Activated CD4-positive, alpha-beta T cell treated with anti-CD3 and anti-CD28 coated beads for 36 hours (primary cell): ENCODE measurements at regions of chr2 and their contacts with region 1.

Region 1: DNA sequence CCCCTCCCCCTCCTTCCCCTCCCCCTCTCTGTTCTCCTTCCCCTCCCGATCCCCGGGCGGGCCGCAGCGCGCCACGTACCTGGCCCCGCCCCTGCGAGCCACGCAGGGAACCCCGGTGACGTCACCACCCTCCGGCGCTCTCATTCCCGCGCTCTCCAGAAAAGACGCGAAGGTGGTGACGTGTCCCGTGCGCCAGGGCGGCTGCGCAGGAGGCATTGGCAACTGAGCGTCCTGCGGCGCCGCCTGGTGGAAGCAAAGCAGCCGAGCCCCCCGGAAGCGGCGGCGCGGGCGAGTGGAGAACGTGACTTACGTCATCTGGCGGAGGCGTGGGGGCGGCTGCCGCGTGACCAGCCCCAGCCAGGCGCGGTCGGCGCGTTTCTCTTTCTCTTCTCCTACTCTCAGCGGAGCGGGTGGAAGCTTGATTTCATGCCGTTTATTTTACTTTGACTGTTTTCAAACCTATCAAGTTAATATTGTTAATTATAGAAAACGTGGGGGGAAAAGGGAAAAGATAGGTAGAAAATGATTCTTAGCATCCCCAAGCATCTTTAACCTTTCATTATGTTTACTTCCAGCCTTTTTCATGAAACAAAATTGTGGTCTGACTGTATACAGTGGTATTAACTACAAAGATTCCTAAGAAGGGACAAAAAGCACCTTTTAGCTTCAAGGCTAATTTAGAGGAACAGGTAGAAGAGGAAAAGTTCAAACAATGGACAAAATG is 48.1 kb downstream of the C2orf42 start:
- DNase-seq: peak; percentile 100
- ATAC-seq: peak; percentile 57
- H3K4me3 Mint-ChIP-seq: peak overlapping the region; percentile 78
- H3K27ac Mint-ChIP-seq: peak overlapping the region; percentile 100
- H3K4me1 Mint-ChIP-seq: peaks cover 66% of the 10 kb centered on the region
- H3K27me3 Mint-ChIP-seq: no peaks in the 10 kb centered on the region

Region 2: DNA sequence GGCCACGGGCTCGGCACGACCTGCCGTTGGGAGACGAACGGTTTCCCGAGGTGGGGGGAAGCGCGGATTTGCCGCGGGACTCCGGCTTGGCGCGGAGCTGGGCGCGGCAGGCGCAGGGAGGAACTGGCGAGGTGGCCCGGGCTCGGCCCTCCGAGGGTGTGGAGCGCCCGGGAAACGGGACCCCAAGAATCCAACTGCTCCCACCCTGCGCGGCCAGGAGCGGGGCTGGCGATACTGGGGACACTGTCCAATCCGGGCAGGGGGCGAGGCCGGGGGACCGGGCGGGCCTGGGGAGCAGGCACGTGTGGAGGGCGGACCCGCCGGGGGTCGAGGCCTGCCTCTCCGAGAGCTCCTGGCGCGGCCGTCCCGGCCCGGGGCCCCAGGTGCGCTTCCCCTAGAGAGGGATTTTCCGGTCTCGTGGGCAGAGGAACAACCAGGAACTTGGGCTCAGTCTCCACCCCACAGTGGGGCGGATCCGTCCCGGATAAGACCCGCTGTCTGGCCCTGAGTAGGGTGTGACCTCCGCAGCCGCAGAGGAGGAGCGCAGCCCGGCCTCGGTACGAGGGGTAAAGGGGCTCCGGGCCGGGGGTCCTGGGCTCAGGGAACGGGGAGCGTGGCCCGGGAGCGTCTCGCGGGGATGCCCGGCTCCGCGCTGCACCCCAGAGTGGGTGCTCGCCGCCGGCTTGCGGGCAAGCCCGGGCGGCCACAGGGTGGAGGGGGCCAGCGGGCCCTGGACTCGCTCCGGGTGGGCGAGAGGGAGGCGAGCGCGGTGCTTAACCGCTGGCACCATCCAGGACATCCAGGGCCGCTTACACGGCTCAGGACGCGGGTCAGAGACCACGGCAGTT is 400.9 kb before region 1 on chr2 and contains the start of gene ANXA4:
- CTCF ChIA-PET with region 1: no interaction called
- POLR2A ChIA-PET with region 1: no interaction called
- intact Hi-C with region 1: loop called in 1 of 2 experiments (anchors 10 kb)
- DNase-seq: peak; percentile 73
- ATAC-seq: peak; percentile 86
- H3K4me3 Mint-ChIP-seq: peak within 1 kb of the TSS; percentile 78
- H3K27ac Mint-ChIP-seq: peak within 1 kb of the TSS; percentile 81
- H3K4me1 Mint-ChIP-seq: peaks cover 11% of the 10 kb centered on the region
- H3K27me3 Mint-ChIP-seq: no peaks in the 10 kb centered on the region
- total RNA-seq, gene ANXA4: 24.8 to 30.7 TPM

Region 3: GRCh38 chr2:70086838-70087701 is 55.7 kb before region 1 on chr2 and contains the start of gene PCBP1:
- CTCF ChIA-PET with region 1: interaction called, 6 read pairs
- POLR2A ChIA-PET with region 1: interaction called, 6 read pairs
- intact Hi-C with region 1: loop called (anchors 1 kb)
- DNase-seq: peak; percentile 98
- ATAC-seq: peak; percentile 37
- H3K4me3 Mint-ChIP-seq: peak within 1 kb of the TSS; percentile 100
- H3K27ac Mint-ChIP-seq: peak within 1 kb of the TSS; percentile 100
- H3K4me1 Mint-ChIP-seq: peaks cover 52% of the 10 kb centered on the region
- H3K27me3 Mint-ChIP-seq: no peaks in the 10 kb centered on the region
- total RNA-seq, gene PCBP1: 417 to 450 TPM

Region 4: DNA sequence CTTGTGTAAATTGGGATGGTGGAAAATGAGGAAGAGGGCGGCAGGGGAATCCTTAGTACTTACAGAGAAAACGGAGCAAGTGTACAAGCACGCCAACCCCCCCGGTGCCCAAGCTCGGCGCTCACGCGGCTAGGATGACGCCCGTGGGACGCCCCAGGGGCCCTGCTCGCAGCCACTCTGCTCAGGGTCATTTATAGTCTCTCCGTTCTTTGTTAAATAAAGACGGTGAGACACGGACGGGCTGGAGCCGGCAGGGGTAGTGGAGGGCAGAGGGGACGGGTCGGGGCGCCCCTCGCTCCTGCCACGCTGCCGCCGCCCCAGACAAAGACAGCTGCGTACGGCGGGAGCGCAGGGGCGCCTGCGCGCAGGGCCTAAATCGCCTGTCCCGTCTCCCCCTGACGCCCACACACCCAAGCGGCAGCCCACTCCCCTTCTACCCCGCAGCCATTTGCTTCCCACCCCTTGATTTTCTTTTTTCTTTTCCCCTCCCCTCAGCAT is 17.7 kb before region 1 on chr2:
- CTCF ChIA-PET with region 1: interaction called, 5 read pairs
- POLR2A ChIA-PET with region 1: interaction called, 24 read pairs
- intact Hi-C with region 1: loop called (anchors 1 kb)
- DNase-seq: peak; percentile 74
- ATAC-seq: peak; percentile 53
- H3K4me3 Mint-ChIP-seq: peak overlapping the region; percentile 92
- H3K27ac Mint-ChIP-seq: peak overlapping the region; percentile 100
- H3K4me1 Mint-ChIP-seq: peaks cover 72% of the 10 kb centered on the region
- H3K27me3 Mint-ChIP-seq: no peaks in the 10 kb centered on the region

Region 5: DNA sequence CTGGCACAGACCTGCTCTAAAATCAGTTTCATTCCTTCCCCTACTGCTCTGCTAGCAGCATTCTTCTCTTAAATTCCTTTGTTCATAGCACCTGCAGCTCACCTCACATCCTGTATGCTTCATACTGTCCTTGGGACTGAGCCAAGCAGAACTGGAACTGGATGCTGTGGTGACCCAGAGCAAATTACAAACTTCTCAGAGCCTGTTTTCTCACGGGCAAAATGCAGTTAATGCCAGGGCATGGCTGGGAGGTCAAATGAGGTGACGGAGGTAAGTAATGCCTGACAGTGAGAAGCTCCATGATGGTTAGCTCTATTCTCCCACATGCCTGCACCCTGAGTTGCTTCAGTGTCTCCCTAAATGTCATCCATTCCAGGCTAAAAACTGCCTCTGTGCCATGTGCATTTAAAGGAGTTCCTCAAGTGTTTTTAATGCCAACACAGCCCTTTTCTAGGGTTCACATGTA is 18.4 kb after region 1 on chr2:
- CTCF ChIA-PET with region 1: interaction called, 3 read pairs
- POLR2A ChIA-PET with region 1: interaction called, 11 read pairs
- intact Hi-C with region 1: no loop called
- DNase-seq: peak; percentile 24
- ATAC-seq: peak; percentile 78
- H3K4me3 Mint-ChIP-seq: no peak overlapping the region
- H3K27ac Mint-ChIP-seq: peak overlapping the region; percentile 20
- H3K4me1 Mint-ChIP-seq: peaks cover 7% of the 10 kb centered on the region
- H3K27me3 Mint-ChIP-seq: no peaks in the 10 kb centered on the region

Region 6: DNA sequence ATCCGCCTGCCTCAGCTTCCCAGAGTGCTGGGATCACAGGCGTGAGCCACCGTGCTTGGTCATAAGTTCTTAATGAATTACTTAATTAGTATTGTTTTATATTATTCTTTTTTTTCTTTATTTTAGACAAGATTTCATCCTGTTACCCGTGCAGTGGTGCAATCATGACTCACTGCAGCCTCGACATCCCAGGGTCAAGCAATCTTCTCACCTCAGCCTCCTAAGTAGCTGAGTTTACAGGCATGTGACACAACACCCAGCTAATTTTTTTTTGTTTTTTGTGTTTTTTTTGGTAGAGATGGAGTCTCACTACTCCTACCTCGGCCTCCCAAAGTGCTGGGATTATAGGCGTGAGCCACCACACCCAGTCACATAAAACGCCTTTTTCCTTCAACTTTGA is 30.8 kb after region 1 on chr2:
- CTCF ChIA-PET with region 1: no interaction called
- POLR2A ChIA-PET with region 1: no interaction called
- intact Hi-C with region 1: no loop called
- DNase-seq: no peak
- ATAC-seq: no peak
- H3K4me3 Mint-ChIP-seq: no peak overlapping the region
- H3K27ac Mint-ChIP-seq: no peak overlapping the region
- H3K4me1 Mint-ChIP-seq: no peaks in the 10 kb centered on the region
- H3K27me3 Mint-ChIP-seq: no peaks in the 10 kb centered on the region

Region 7: DNA sequence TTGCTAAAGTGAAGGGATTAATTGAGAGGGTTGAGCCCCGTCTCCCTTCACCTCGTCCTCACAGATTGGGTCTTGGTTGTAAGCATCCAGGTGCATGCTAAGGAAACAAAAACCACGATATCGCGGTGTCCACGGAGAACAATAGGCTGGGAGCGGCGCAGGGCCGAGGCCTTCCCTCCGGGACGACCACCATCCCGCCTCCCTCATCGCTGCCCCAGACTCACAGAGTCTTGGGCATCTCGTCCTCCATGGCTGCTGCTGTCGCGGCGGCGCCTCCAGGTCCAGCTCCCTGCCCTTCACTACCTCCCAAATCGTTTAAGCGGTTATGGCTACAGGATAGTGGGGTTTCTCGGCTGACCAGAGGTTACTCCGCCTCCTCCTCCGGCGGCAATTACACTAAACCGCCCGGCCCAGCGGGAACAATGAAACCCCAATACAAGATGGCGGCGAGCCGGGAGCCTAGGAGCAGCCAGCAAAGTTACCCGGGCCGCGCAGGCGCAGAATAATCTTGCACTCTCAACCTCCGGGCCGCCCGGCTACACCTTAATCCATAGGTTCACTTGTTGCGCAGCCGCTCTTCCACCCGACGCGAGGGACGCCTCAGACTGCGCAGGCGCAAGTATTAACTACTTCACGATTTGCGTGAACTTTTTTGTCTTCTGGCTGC is 105.6 kb after region 1 on chr2 and contains the start of gene TIA1:
- CTCF ChIA-PET with region 1: no interaction called
- POLR2A ChIA-PET with region 1: no interaction called
- intact Hi-C with region 1: loop called in 1 of 2 experiments (anchors 1 kb)
- DNase-seq: peak; percentile 99
- ATAC-seq: peak; percentile 98
- H3K4me3 Mint-ChIP-seq: peak within 1 kb of the TSS; percentile 98
- H3K27ac Mint-ChIP-seq: peak within 1 kb of the TSS; percentile 97
- H3K4me1 Mint-ChIP-seq: peaks cover 30% of the 10 kb centered on the region
- H3K27me3 Mint-ChIP-seq: no peaks in the 10 kb centered on the region
- total RNA-seq, gene TIA1: 85.4 to 98.3 TPM

Region 8: GRCh38 chr2:70280242-70280798 is 137.6 kb after region 1 on chr2:
- CTCF ChIA-PET with region 1: no interaction called
- POLR2A ChIA-PET with region 1: no interaction called
- intact Hi-C with region 1: no loop called
- DNase-seq: no peak
- ATAC-seq: no peak
- H3K4me3 Mint-ChIP-seq: no peak overlapping the region
- H3K27ac Mint-ChIP-seq: no peak overlapping the region
- H3K4me1 Mint-ChIP-seq: peaks cover 21% of the 10 kb centered on the region
- H3K27me3 Mint-ChIP-seq: no peaks in the 10 kb centered on the region

Region 9: DNA sequence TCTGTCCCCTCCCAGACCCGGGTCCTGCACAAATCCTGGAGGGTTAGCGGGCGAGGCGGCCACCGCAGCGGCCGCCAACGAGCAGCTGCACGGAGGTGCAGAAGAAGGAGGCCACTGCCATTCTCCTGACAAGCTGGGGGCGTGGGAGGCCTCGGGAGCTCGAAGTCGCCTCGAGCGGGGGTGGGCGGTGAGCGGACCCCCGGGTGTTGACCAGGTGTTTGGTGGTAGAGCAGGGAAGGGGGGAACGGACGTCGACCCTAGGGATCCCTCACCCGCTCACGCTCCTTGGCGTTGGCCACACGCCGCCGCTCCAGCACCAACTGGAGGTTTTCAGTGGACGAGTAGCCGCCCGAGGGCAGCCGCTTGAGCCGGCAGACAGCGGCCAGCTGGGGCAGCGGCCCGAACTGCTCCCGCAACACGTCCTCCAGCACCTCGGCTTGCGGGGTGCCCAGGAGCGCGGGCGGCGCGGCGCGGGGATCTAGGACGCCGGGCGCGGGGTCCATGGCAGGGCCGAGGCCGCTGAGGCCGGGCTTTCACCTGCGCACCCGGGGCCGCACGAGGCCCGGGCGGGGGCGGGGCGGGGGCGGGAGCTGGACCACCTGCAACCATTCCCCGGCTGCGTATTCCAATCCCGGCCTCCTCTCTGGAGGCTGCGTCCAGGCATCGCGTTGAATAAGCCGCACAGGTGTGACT is 647.5 kb after region 1 on chr2 and contains the start of gene FIGLA:
- CTCF ChIA-PET with region 1: no interaction called
- POLR2A ChIA-PET with region 1: no interaction called
- intact Hi-C with region 1: no loop called
- DNase-seq: no peak
- ATAC-seq: no peak
- H3K4me3 Mint-ChIP-seq: peak within 1 kb of the TSS; percentile 56
- H3K27ac Mint-ChIP-seq: peak within 1 kb of the TSS; percentile 27
- H3K4me1 Mint-ChIP-seq: peaks cover 8% of the 10 kb centered on the region
- H3K27me3 Mint-ChIP-seq: peaks cover 53% of the 10 kb centered on the region
- total RNA-seq, gene FIGLA: not detected